Caco-2 (cell line): ENCODE measurements at regions of chr11 and their contacts with region 1.

Region 1: DNA sequence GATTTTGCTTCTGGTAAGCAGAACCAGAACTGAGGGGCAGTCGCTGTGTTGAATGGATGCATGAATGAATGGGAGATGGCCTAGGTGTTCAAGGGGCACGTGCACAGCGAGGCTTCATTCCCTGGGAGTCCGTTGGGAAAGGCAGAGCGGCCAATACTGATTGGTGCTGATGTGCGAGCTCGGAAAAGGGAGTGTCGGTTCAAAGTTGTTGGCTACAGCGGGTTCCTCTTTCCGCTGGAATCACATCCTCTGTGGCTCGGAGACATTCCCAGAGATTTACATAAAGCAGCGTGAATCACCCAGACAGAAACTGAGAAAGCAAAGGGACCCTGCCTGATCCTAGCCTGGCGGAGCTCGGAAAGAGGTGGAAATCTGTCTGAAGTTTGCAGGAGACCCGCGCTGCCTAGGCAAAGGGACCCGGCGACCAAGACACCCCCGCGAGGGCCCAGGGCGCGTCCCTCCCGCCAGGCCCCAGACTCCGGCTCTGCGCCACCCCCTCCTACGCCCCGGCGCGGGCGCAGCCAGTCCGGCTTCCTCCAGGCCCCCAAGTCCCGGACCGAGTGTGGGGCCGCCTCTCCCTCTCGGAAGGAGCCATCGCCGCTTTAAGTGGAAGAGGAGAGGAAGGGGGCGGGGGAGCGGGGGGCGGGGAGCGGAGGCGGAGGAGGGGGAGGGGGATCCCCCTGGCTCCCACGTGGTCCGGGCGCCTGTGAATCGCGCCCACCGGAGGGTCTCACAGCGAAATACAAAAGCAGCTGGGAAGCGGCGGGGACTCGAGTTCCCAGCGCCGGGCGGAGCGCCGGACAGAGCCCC is at the start of gene FJX1:
- DNase-seq: peak; percentile 69 to 71
- H3K4me3 ChIP-seq: peak within 1 kb of the TSS; percentile 61
- H3K4me3 Mint-ChIP-seq: peak within 1 kb of the TSS; percentile 81
- H3K27ac Mint-ChIP-seq: peak within 1 kb of the TSS; percentile 76
- H3K4me1 ChIP-seq: peaks cover 26% of the 10 kb centered on the region
- H3K4me1 Mint-ChIP-seq: peaks cover 20% of the 10 kb centered on the region
- H3K27me3 ChIP-seq: no peaks in the 10 kb centered on the region
- H3K27me3 Mint-ChIP-seq: peaks cover 2% of the 10 kb centered on the region
- CTCF ChIP-seq: no peak
- total RNA-seq, gene FJX1: 12.0 and 14.4 TPM in 2 replicates

Region 2: GRCh38 chr11:35629914-35630313 is 12.0 kb after region 1 on chr11:
- CTCF ChIA-PET with region 1: no interaction called
- POLR2A ChIA-PET with region 1: no interaction called
- intact Hi-C with region 1: loop called (anchors 1 kb)
- DNase-seq: peak; percentile 18 to 56
- H3K4me3 ChIP-seq: no peak overlapping the region
- H3K4me3 Mint-ChIP-seq: no peak overlapping the region
- H3K27ac Mint-ChIP-seq: no peak overlapping the region
- H3K4me1 ChIP-seq: peaks cover 20% of the 10 kb centered on the region
- H3K4me1 Mint-ChIP-seq: peaks cover 13% of the 10 kb centered on the region
- H3K27me3 ChIP-seq: no peaks in the 10 kb centered on the region
- H3K27me3 Mint-ChIP-seq: no peaks in the 10 kb centered on the region
- CTCF ChIP-seq: no peak

Region 3: GRCh38 chr11:35683728-35684339 is 65.9 kb after region 1 on chr11:
- CTCF ChIA-PET with region 1: no interaction called
- POLR2A ChIA-PET with region 1: no interaction called
- intact Hi-C with region 1: loop called (anchors 2 kb)
- DNase-seq: no peak
- H3K4me3 ChIP-seq: no peak overlapping the region
- H3K4me3 Mint-ChIP-seq: no peak overlapping the region
- H3K27ac Mint-ChIP-seq: no peak overlapping the region
- H3K4me1 ChIP-seq: peaks cover 32% of the 10 kb centered on the region
- H3K4me1 Mint-ChIP-seq: peaks cover 32% of the 10 kb centered on the region
- H3K27me3 ChIP-seq: no peaks in the 10 kb centered on the region
- H3K27me3 Mint-ChIP-seq: no peaks in the 10 kb centered on the region
- CTCF ChIP-seq: no peak

Region 4: DNA sequence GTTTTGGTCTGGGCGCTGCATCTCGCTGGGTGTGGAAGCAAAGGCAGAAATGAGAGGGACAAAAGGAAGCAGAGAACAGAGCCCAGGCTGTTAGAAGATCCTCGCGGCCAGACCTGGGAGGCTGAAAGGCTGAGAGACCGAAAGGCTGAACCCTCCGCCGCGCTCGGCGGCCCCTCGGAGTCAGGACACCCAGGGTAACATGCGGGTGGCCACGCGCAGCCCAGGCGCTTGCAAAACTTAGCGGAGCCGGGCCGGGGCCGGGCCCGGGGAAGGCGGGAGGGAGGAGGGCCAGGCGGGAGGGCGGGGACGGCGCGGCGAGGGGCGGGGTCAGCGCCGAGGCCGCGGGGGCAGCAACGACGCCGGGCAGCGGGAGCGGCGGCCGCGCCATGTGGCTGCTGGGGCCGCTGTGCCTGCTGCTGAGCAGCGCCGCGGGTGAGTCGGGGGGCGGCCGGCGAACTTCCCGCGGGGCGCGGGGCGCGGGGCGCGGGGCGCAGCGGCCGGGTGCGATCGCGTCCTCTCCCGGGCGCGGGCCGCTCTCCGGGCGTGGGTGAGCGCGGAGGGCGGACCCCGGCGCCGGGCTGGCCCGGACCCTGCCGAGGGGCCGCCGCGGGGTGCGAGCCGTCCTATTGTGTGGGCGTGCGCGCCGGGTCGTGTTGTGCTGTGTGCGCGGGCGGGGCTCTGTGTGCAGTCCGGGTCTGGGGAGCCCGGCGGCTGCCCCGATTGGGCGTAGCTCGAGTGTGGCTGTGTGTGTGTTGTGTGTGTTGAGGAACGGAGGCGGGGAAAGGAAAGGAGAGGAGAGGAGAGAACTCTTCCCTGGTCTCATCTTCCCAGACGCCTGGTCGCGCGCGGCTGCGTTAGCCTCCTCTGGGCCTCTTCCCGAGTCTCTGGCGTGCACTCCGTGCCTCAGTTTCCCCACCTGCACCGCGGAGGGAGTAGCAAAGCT is 326.1 kb after region 1 on chr11 and contains the start of gene LDLRAD3:
- CTCF ChIA-PET with region 1: no interaction called
- POLR2A ChIA-PET with region 1: no interaction called
- intact Hi-C with region 1: loop called (anchors 1 kb)
- DNase-seq: peak; percentile 80
- H3K4me3 ChIP-seq: peak within 1 kb of the TSS; percentile 60
- H3K4me3 Mint-ChIP-seq: peak within 1 kb of the TSS; percentile 79
- H3K27ac Mint-ChIP-seq: peak within 1 kb of the TSS; percentile 78
- H3K4me1 ChIP-seq: 0 out of 2 replicates have a peak, but pooled peaks cover 7% of the 10 kb centered on the region
- H3K4me1 Mint-ChIP-seq: no peaks in the 10 kb centered on the region
- H3K27me3 ChIP-seq: no peaks in the 10 kb centered on the region
- H3K27me3 Mint-ChIP-seq: peaks cover 3% of the 10 kb centered on the region
- CTCF ChIP-seq: no peak
- total RNA-seq, gene LDLRAD3: 9.9 and 11.8 TPM in 2 replicates

Region 5: DNA sequence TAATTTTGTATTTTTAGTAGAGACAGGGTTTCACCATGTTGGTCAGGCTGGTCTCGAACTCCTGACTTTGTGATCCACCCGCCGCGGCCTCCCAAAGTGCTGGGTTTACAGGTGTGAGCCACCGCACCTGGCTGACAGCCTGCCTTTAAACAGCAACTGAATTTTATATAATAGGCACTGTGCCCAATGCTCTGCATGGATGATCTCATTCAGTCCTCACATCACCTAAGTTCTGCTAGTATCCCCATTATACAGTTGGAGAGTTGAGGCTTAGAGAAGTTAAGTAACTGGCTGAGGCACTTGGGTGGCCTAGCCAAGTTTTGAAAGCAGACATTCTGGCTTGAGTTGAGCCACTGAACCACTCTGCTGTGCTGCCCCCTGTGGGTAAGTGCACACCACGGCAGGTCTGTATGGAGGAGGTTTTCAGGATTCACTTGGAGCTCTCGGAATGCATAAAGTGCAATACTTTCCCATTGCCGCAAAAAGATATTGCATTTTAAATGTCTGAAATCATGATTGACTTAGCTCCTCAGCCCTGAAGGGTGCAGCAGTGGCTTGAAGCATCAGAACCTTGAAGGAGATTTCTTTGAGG is 438.4 kb after region 1 on chr11:
- CTCF ChIA-PET with region 1: no interaction called
- POLR2A ChIA-PET with region 1: no interaction called
- intact Hi-C with region 1: loop called (anchors 1 kb)
- DNase-seq: peak in 1 of 2 experiments; percentile 38
- H3K4me3 ChIP-seq: no peak overlapping the region
- H3K4me3 Mint-ChIP-seq: no peak overlapping the region
- H3K27ac Mint-ChIP-seq: no peak overlapping the region
- H3K4me1 ChIP-seq: no peaks in the 10 kb centered on the region
- H3K4me1 Mint-ChIP-seq: no peaks in the 10 kb centered on the region
- H3K27me3 ChIP-seq: no peaks in the 10 kb centered on the region
- H3K27me3 Mint-ChIP-seq: no peaks in the 10 kb centered on the region
- CTCF ChIP-seq: peak; percentile 26 to 70

Region 6: DNA sequence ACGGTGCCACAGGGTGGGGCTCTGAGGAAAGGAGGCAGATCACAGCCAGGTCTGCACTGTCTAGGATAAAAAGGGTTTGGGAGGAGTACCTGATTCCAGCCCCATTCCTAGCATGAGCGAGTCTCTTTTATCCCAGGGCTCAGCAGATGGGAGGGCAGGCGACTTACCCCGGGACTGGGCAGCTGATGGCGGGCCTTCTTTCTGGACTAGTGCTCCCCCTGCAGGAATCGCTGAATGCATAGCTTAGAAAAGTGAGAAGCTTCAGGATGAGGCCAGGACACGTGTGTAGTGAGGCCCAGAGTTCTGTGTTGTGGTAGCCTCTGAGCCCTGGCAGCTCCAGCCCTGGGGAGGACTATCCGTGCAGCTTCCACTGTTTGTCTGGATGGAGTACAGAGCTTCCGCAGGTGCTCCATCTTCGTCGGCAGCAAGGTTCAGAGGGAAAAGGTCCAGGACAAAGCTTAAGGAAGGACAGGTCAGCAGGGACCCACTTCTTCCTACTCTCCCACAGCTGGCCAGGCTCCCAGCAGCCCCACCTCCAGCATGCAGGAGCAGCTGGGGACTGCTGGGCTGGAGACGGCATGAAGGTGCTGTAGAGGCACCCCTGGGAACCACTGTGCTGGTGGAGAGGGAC is 641.0 kb after region 1 on chr11:
- CTCF ChIA-PET with region 1: interaction called, 4 read pairs
- POLR2A ChIA-PET with region 1: no interaction called
- intact Hi-C with region 1: loop called (anchors 1 kb)
- DNase-seq: peak; percentile 73 to 76
- H3K4me3 ChIP-seq: no peak overlapping the region
- H3K4me3 Mint-ChIP-seq: no peak overlapping the region
- H3K27ac Mint-ChIP-seq: peak overlapping the region; percentile 43
- H3K4me1 ChIP-seq: peaks cover 12% of the 10 kb centered on the region; the same call in 1 of the 2 replicates
- H3K4me1 Mint-ChIP-seq: peaks cover 12% of the 10 kb centered on the region
- H3K27me3 ChIP-seq: no peaks in the 10 kb centered on the region
- H3K27me3 Mint-ChIP-seq: no peaks in the 10 kb centered on the region
- CTCF ChIP-seq: peak; percentile 62 to 79

Region 7: DNA sequence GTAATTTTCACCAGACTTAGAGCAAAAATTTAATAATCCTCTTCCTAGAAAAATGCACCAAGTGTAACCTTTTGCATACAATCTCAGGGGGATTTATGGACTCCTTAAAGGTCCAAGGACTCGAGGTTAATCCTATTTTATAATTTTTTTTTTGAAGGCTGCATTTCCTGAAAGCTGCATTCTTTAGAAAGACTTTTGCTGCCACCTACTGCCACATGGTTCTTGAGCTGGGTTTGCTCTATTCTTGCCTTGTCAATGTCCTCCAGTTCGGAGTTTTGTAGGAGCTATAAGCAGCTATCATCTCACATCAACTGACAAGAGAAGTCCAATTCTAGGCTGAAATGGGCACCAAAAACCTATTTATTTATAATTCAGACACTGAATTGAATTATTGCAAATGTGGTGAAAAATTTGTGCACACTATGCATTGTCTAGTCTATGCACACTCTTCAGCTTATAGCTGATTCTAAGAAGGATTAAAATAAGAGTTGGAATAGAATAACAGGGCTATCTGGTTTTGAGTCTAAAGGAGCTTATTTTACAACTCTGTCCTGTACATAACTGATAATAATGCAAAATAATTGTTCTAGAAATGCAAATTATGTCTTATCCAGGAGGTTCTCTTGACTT is 860.9 kb after region 1 on chr11:
- CTCF ChIA-PET with region 1: no interaction called
- POLR2A ChIA-PET with region 1: no interaction called
- intact Hi-C with region 1: loop called (anchors 5 kb)
- DNase-seq: peak in 1 of 2 experiments; percentile 57
- H3K4me3 ChIP-seq: no peak overlapping the region
- H3K4me3 Mint-ChIP-seq: no peak overlapping the region
- H3K27ac Mint-ChIP-seq: no peak overlapping the region
- H3K4me1 ChIP-seq: no peaks in the 10 kb centered on the region
- H3K4me1 Mint-ChIP-seq: no peaks in the 10 kb centered on the region
- H3K27me3 ChIP-seq: no peaks in the 10 kb centered on the region
- H3K27me3 Mint-ChIP-seq: no peaks in the 10 kb centered on the region
- CTCF ChIP-seq: peak in 1 of 2 experiments; percentile 74